ENCODE measurements at regions of chr20 and their contacts with region 1.

Region 1: GRCh38 chr20:4956200-4956810 is 45.0 kb downstream of the SLC23A2 start:
- DNase-seq: no peak
- H3K4me3 Mint-ChIP-seq: no peak overlapping the region
- H3K27ac Mint-ChIP-seq: no peak overlapping the region
- H3K4me1 Mint-ChIP-seq: peaks cover 16% of the 10 kb centered on the region
- H3K27me3 Mint-ChIP-seq: no peaks in the 10 kb centered on the region

Region 2: DNA sequence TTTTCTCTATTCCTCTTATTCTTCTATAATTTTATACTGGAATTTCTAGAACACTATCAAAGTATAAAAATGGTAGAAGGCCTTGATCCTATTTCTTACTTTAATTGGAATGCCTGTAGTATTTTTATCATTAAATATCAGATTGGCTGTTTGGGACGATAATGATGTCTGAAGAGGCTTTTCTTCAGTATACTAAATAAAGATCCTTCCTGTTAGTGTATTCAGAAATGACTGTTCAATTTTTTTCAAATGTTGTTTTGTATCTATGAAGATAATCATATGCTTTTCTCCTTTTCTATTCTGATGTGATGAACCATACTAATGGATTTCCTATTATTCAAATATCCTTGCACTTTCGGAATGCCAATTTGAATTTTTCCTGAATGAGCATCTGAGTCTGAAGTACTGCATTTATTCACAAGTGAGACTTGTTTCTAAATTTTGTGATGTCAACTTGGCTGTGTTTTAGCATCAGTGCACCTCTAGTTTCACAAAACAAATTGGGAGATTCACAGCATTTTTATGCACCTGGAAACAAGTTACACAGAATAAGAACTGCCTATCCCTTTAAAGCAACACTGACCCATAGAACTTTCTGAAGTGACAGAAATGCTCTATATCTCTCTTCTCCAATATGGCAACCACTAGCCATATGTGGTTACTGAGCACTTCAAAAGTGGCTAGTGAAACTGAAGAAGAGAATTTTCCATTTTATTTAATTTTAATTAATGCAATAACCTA is 306.2 kb before region 1 on chr20:
- CTCF ChIA-PET with region 1: no interaction called
- POLR2A ChIA-PET with region 1: no interaction called
- intact Hi-C with region 1: no loop called
- DNase-seq: no peak
- H3K4me3 Mint-ChIP-seq: no peak overlapping the region
- H3K27ac Mint-ChIP-seq: no peak overlapping the region
- H3K4me1 Mint-ChIP-seq: no peaks in the 10 kb centered on the region
- H3K27me3 Mint-ChIP-seq: no peaks in the 10 kb centered on the region

Region 3: GRCh38 chr20:4740774-4741431 is 215.4 kb before region 1 on chr20:
- CTCF ChIA-PET with region 1: interaction called, 29 read pairs
- POLR2A ChIA-PET with region 1: no interaction called
- intact Hi-C with region 1: loop called (anchors 1 kb)
- DNase-seq: peak; percentile 77
- H3K4me3 Mint-ChIP-seq: no peak overlapping the region
- H3K27ac Mint-ChIP-seq: no peak overlapping the region
- H3K4me1 Mint-ChIP-seq: no peaks in the 10 kb centered on the region
- H3K27me3 Mint-ChIP-seq: peaks cover 7% of the 10 kb centered on the region

Region 4: DNA sequence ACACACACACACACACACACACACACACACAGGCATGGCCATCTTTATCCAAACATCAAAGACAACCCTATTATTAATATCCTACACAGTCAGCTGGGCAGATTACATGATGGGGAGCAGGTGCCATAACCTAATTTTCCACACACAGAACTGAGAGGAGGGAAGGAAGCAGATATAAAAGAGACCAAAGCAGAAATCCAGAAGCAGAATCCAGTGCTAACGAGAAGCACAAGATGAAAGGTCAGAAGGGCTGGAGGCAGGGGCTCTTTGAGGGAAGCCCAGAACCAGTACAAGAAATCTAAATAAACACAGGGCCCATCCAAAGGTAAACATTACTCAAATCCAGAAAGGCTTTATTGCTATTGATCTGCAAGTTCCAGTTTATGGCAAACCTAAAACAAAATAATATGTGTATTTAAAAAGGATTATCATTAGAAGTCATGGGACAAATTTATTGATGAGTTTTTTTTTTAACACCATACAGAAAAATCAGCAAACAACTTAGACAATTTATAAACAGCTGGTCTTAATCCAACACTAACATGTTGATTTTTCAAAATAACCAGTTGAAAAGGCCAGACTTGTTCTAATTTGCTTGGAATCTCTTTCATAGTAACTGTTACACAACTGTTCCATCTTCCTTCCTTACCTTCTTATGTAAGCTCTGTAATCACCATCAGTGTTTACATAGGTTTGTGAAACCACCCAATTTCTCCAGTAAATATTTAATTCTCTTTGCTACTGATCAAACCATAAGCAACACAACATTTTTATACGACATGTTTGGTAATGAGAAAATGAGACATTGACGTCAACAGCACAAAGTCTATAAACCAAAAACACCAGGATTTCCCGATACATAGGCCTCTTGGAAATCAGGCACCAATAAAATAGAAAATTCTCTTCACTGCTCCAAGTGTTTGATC is 10.8 kb after region 1 on chr20:
- CTCF ChIA-PET with region 1: interaction called, 11 read pairs
- POLR2A ChIA-PET with region 1: no interaction called
- intact Hi-C with region 1: no loop called
- DNase-seq: no peak
- H3K4me3 Mint-ChIP-seq: no peak overlapping the region
- H3K27ac Mint-ChIP-seq: no peak overlapping the region
- H3K4me1 Mint-ChIP-seq: peaks cover 10% of the 10 kb centered on the region
- H3K27me3 Mint-ChIP-seq: no peaks in the 10 kb centered on the region

Region 5: DNA sequence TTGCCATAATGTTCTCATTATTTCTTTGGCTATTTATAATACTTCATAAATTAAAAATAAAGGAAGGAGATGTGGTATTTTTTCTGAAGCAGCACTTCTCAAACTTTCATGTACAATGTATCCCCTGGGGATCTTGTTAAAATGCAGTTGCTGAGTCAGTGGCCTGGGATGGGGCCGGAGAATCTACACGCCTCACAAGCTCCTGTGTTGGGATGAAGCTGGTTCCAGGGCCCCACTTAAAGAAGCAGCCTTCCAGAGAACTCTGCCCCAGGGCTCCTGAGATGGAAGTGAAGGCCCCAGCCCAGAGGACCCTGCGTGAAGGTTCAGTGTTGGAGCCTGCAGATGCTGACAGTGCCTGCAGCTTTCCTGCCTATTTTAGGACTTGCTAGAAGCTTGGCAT is 85.1 kb after region 1 on chr20:
- CTCF ChIA-PET with region 1: no interaction called
- POLR2A ChIA-PET with region 1: no interaction called
- intact Hi-C with region 1: no loop called
- DNase-seq: no peak
- H3K4me3 Mint-ChIP-seq: no peak overlapping the region
- H3K27ac Mint-ChIP-seq: no peak overlapping the region
- H3K4me1 Mint-ChIP-seq: peaks cover 6% of the 10 kb centered on the region
- H3K27me3 Mint-ChIP-seq: no peaks in the 10 kb centered on the region

Measured in activated CD4-positive, alpha-beta memory T cell treated with anti-CD3 and anti-CD28 coated beads for 36 hours (primary cell).